Activated CD4-positive, alpha-beta T cell treated with anti-CD3 and anti-CD28 coated beads for 36 hours (primary cell): ENCODE measurements at regions of chr10 and their contacts with region 1.

Region 1: GRCh38 chr10:95374597-95375209 is 83.9 kb upstream of the PDLIM1 start:
- DNase-seq: peak; percentile 87
- ATAC-seq: peak; percentile 99
- H3K4me3 Mint-ChIP-seq: no peak overlapping the region
- H3K27ac Mint-ChIP-seq: no peak overlapping the region
- H3K4me1 Mint-ChIP-seq: no peaks in the 10 kb centered on the region
- H3K27me3 Mint-ChIP-seq: peaks cover 13% of the 10 kb centered on the region

Region 2: GRCh38 chr10:95363303-95363912 is 11.3 kb before region 1 on chr10:
- CTCF ChIA-PET with region 1: interaction called, 47 read pairs
- POLR2A ChIA-PET with region 1: no interaction called
- intact Hi-C with region 1: no loop called
- DNase-seq: peak; percentile 61
- ATAC-seq: peak; percentile 70
- H3K4me3 Mint-ChIP-seq: no peak overlapping the region
- H3K27ac Mint-ChIP-seq: no peak overlapping the region
- H3K4me1 Mint-ChIP-seq: no peaks in the 10 kb centered on the region
- H3K27me3 Mint-ChIP-seq: peaks cover 7% of the 10 kb centered on the region

Region 3: DNA sequence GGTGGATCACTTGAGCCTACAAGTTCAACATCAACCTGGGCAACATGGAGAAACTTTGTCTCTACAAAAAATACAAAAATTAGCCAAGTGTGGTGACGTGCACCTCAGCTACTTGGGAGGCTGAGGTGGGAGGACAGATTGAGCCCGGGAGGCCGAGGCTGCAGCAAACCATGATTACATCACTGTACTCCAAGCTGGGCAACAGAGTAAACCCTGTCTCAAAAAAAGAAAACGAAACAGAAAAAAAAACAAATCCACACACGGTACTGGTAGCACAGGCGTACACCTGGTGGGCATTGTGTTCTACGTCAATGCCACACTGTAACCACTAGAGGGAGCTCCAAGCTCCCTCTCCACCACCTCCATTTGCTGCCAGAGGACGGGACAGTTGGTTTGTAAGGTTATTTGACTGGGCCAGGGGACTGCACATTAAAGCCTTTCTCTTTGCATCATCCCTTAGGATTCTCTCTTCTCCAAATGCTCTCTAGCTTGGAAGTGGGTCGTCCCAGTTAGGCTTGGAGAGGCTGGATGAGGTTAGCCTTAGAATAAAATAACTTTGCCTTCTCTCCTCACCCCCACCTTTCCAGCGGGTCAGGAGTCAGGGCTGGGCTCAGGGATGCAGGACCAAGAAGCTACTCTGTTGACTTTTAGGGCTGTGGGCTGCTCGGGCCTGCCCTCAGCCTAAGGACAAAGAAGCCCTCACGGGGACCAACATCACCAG is 55.7 kb after region 1 on chr10:
- CTCF ChIA-PET with region 1: interaction called, 29 read pairs
- POLR2A ChIA-PET with region 1: no interaction called
- intact Hi-C with region 1: loop called in 1 of 2 experiments (anchors 1 kb)
- DNase-seq: peak; percentile 60
- ATAC-seq: peak; percentile 94
- H3K4me3 Mint-ChIP-seq: no peak overlapping the region
- H3K27ac Mint-ChIP-seq: no peak overlapping the region
- H3K4me1 Mint-ChIP-seq: no peaks in the 10 kb centered on the region
- H3K27me3 Mint-ChIP-seq: no peaks in the 10 kb centered on the region

Region 4: GRCh38 chr10:95472304-95473088 is 97.8 kb after region 1 on chr10:
- CTCF ChIA-PET with region 1: no interaction called
- POLR2A ChIA-PET with region 1: no interaction called
- intact Hi-C with region 1: no loop called
- DNase-seq: no peak
- ATAC-seq: no peak
- H3K4me3 Mint-ChIP-seq: no peak overlapping the region
- H3K27ac Mint-ChIP-seq: no peak overlapping the region
- H3K4me1 Mint-ChIP-seq: no peaks in the 10 kb centered on the region
- H3K27me3 Mint-ChIP-seq: peaks cover 2% of the 10 kb centered on the region

Region 5: GRCh38 chr10:95601116-95601719 is 226.5 kb after region 1 on chr10:
- CTCF ChIA-PET with region 1: interaction called, 41 read pairs
- POLR2A ChIA-PET with region 1: no interaction called
- intact Hi-C with region 1: loop called (anchors 1 kb)
- DNase-seq: peak; percentile 72
- ATAC-seq: peak; percentile 65
- H3K4me3 Mint-ChIP-seq: no peak overlapping the region
- H3K27ac Mint-ChIP-seq: no peak overlapping the region
- H3K4me1 Mint-ChIP-seq: no peaks in the 10 kb centered on the region
- H3K27me3 Mint-ChIP-seq: peaks cover 5% of the 10 kb centered on the region

Region 6: DNA sequence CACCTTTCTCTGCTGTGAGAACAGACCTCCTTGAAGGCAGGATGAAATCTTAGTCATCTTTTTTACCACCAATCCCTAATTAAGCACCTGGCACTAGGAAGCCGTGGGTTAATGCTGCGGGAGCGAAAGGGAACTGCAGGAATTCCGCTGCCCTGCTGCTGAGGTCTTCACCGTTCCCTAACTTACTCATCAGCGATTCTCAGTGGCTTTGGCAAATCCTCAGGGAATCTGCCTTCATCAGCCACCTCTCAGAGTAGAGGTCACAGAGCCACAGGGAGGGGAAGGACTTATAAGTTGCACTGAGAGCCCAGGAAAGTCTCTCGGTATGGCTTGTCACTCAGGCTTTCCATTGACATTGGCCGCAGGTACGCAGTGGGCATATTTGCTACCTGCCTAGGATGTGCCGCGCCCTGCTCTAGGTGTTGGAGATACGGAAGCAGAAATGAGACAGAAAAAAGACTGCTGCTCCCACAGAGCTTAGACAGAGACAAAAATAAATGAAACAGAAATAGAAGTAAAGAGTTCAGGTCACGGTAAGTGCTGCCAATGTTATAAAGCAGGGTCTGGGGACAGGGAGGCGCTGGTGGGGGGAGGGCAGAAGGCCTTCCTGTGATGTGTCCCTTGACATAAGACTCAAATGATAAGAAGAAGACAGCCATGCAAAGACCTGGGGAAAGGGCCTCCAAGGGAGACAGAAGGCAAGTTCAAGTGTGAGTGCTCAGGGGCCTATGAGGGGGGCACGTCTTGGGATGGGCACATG is 1056.7 kb after region 1 on chr10:
- CTCF ChIA-PET with region 1: no interaction called
- POLR2A ChIA-PET with region 1: no interaction called
- intact Hi-C with region 1: no loop called
- DNase-seq: no peak
- ATAC-seq: no peak
- H3K4me3 Mint-ChIP-seq: no peak overlapping the region
- H3K27ac Mint-ChIP-seq: no peak overlapping the region
- H3K4me1 Mint-ChIP-seq: no peaks in the 10 kb centered on the region
- H3K27me3 Mint-ChIP-seq: peaks cover 15% of the 10 kb centered on the region